ENCODE measurements at regions of chr2 and their contacts with region 1.

Region 1: GRCh38 chr2:54106631-54107454 is 8.6 kb upstream of the ACYP2 start:
- DNase-seq: peak in 38 of 42 donors; percentile 34 to 89 (median 66)

Region 2: GRCh38 chr2:54206596-54206995 is 99.8 kb after region 1 on chr2:
- intact Hi-C with region 1: loop called (anchors 10 kb)
- DNase-seq: peak in 5 of 42 donors; percentile 13 to 50 (median 21)

Region 3: DNA sequence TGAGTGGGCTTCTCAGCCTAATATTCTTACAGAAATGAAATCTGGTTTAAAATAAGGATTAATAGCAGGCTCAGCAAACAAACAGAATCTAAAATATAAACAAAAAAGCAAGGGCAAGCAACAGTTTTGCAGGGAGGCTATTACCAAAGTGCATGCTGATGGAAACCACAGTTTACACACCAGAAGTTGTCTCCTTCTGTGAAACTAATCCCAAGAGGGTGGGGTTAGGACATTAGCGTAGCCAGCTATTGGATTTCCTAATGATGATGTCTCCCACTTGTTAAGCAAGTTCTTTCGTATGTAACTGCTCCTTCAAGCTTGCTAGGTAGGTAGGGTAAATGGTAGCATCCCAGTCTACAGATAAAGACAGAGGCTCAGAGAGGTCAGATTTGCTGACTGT is 214.2 kb after region 1 on chr2:
- intact Hi-C with region 1: no loop called
- DNase-seq: no peak

Measured in head of caudate nucleus (tissue), 42 donors.